OCI-LY7 (cell line): ENCODE measurements at regions of chr11 and their contacts with region 1.

Region 1: DNA sequence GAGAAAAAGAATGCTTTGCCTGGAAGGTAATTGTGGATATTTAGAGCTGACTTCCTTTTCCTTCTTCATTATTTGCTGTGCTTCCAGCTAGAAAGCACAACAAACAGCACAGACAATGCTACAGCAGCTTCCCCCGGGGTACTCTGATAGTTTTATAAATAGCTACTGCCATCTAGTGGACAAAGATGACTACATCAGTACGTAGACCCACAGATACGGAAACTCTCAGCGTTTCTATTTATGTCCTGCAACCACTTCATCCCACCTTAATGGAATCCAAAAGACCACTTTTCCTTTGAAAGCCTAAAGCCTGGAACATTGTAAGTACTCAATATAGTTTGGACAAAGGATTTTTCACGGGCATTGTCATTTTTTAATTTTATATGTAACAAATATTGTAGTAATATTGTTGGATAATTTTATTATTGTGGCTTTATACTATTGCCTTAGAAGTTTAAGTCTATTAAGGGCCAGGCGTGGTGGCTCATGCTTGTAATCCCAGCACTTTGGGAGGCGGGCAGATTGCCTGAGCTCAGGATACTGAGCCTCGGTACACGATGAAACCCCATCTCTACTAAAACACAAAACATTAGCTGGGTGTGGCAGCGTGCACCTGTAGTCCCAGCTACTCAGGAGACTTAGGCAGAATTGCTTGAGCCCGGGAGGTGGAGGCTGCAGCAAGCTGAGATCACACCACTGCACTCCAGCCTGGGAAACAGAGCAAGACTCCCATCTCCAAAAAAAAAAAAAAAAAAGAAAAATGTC is 7.5 kb downstream of the HSPA8 start:
- DNase-seq: peak; percentile 88
- H3K4me3 ChIP-seq: no peak overlapping the region
- H3K27ac ChIP-seq: peak overlapping the region; percentile 35
- H3K4me1 ChIP-seq: peaks cover 34% of the 10 kb centered on the region
- CTCF ChIP-seq: peak; percentile 83

Region 2: DNA sequence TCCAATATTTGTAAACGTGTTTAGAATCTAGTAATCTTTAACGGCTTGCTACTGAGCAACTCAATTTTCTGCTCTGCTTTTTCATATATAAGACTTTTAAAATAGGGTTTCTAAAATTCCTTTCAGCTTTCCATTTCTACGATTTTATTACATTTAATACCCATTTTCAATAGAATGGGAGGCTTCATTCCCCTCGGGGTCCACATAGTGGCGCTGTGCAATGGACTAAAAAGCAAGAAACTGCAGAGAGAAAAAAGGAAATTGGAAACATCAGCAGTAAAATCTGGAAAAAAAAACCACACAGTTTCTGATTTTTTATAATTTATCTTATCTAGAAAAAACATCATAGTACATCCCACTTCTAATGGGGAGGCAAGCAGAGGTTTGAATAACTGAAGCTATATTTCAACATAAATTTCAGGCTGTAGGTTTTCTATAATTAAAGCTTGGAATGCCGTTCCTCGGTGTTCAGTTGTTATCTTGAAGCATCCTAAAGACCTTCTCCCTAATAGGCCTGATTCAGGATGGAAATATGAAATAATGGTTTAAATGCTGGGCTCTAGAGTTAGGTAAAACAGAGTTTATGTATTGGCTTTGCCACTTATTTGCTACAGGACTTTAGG is 190.7 kb before region 1 on chr11:
- CTCF ChIA-PET with region 1: no interaction called
- POLR2A ChIA-PET with region 1: interaction called, 8 read pairs
- intact Hi-C with region 1: loop called (anchors 1 kb)
- DNase-seq: peak; percentile 51
- H3K4me3 ChIP-seq: no peak overlapping the region
- H3K27ac ChIP-seq: no peak overlapping the region
- H3K4me1 ChIP-seq: no peaks in the 10 kb centered on the region
- CTCF ChIP-seq: peak; percentile 99

Region 3: DNA sequence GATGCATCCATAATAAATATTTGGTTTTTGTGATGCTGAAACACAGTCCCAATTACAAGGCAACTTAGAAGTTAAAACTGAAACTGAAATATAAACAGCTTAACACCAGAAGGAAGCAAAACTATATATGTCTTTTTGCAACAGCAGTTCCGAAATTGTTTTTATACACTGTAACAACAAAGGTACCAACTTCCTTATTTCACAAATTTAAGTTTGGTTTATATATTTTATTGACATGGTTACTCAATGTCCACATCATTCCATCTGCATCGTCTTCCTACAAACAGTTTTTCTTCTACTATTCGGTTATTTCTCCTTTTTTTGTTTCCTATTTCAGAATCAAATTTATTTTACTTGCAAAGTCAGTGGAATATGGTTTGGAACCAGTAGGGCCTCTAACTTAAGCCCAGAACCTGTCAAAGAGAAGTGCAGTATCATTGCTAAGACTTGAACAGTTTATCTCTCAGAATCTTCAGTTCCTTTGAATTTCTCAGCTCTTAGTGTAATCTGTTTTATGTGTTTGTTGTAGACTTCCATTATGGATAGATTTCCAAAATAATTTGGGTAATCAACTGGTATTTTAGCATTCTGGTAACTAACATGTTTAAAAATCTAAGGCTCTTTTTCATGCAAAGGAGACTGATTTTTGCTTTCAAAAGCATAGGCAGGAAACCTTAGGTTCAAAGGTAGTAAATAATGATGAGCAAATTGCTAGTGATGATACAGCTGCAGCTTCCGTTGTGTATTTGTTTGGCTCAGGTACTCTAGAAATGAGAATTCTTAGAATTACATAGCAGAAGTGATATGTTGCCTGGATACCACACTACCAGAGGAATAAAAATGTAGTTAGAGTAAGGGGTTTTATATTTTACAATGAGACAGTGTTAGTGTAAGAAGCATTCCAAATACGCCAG is 15.7 kb after region 1 on chr11:
- CTCF ChIA-PET with region 1: no interaction called
- POLR2A ChIA-PET with region 1: interaction called, 12 read pairs
- intact Hi-C with region 1: no loop called
- DNase-seq: peak; percentile 62
- H3K4me3 ChIP-seq: peak overlapping the region; percentile 59
- H3K27ac ChIP-seq: peak overlapping the region; percentile 43
- H3K4me1 ChIP-seq: peaks cover 46% of the 10 kb centered on the region
- CTCF ChIP-seq: no peak